ENCODE measurements at regions of chr19 and their contacts with region 1.

Region 1: DNA sequence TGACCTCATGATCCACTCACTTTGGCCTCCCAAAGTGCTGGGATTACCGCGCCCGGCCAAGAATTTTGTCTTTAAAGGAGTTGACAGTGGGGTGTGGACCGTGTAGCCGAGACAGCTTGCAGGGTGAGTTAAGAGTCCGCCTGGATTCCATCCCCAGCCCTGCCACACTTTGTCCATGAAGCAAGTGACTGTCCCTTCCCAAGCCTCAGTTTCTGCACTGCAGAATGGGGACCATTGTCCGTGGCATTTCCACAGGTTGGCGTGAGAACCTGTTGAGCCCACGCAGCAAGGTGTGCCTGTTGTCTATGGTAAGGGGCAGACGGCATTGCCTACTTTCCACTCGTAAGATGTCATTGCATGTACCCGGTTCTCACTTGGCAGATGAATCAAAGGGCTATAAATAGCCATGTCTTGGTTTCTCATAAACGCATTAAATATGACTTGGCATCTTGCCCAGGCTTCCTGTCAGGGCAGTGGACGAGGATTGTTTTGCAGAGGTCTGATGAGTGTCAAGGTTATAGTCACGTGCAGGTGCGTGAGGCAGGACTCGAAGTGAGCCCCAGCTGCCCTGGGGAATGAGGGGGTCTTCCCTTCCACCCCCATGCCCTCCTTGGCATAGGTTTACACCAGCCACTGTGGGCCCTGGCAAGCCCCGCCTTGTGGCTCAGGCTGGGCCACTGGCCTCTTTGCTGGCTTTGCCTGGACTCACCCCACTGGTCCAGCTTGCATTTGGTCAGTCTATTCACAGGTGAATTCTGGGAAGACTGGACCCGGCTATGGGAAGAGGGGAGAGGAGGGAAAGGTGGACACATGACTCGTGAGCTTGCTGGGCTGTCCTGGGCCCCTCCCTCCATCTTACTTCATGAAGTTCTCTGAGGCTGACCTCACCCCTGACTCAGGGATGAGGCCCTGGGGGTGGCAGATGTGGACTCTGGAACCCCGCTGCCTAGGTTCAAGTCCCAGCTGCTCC is 14.6 kb downstream of the FAM187B start:
- DNase-seq: peak; percentile 96 to 100 (median 97)
- H3K4me3 ChIP-seq: peak overlapping the region in 1 of 3 experiments; percentile 60
- H3K4me3 Mint-ChIP-seq: peak overlapping the region; percentile 49 to 69
- H3K27ac ChIP-seq: peak overlapping the region; percentile 81 to 95
- H3K27ac Mint-ChIP-seq: peak overlapping the region; percentile 93 to 98 (median 97)
- H3K4me1 ChIP-seq: peaks cover 80 to 82% of the 10 kb centered on the region in 2 donors
- H3K4me1 Mint-ChIP-seq: peaks cover 72% of the 10 kb centered on the region
- H3K27me3 ChIP-seq: no peaks in the 10 kb centered on the region
- H3K27me3 Mint-ChIP-seq: peaks cover 0 to 10% (median 0%) of the 10 kb centered on the region in 3 donors
- CTCF ChIP-seq: no peak

Region 2: DNA sequence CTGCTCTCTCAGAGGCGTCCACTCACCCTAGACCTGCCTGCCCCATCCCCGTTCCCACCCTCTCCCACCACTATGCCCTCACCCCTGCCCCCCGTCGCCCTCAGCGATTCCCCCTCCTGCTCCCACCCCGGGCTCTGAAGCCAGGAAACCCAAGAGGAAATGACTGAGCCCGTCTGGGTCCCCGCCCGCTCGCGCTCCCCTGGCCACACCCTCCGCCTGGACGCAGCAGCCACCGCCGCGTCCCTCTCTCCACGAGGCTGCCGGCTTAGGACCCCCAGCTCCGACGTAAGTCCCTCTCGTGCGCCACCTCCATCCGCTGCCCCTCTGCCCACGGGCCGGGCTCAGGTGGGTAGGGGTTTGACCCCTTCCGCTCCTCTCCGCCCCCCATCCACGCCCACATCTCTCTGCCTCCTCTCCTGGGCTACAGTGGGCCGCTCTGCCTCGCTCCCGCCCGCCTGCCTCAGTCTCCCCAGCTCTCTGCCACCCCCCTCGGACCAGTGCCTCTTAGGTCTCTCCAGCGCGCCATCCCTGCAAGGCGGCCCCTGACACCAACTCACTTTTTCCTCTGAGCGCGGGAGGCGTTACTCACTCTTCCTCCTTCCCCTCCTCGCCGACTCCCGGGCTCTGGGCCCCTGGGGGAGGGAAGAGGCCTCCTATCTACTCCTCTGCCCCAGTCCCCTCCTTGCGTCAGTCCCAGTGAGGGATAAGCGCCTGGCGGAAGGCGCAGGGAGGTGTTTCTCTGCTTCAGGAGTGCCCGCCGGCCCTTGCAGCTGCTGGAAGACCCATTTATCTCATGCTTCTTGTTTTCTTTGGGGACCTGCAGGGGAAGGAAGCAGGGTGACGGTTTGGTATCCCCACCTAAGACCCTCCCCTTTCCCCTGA is 59.2 kb before region 1 on chr19 and contains the start of gene FXYD5:
- intact Hi-C with region 1: loop called in 1 of 2 experiments (anchors 2 kb)
- DNase-seq: peak; percentile 77 to 85 (median 79)
- H3K4me3 ChIP-seq: peak within 1 kb of the TSS; percentile 74 to 95 (median 89)
- H3K4me3 Mint-ChIP-seq: peak within 1 kb of the TSS; percentile 99 to 100
- H3K27ac ChIP-seq: peak within 1 kb of the TSS; percentile 76 to 88
- H3K27ac Mint-ChIP-seq: peak within 1 kb of the TSS; percentile 88 to 100 (median 98)
- H3K4me1 ChIP-seq: peaks cover 39 to 57% of the 10 kb centered on the region in 2 donors
- H3K4me1 Mint-ChIP-seq: peaks cover 50% of the 10 kb centered on the region
- H3K27me3 ChIP-seq: no peaks in the 10 kb centered on the region
- H3K27me3 Mint-ChIP-seq: peaks cover 5 to 14% (median 5%) of the 10 kb centered on the region in 3 donors
- CTCF ChIP-seq: no peak
- polyA plus RNA-seq, gene FXYD5: 204 to 673 (median 312) TPM

Region 3: GRCh38 chr19:35177377-35178274 is 36.3 kb before region 1 on chr19:
- intact Hi-C with region 1: loop called in 1 of 2 experiments (anchors 5 kb)
- DNase-seq: peak in 1 of 3 donors; percentile 59
- H3K4me3 ChIP-seq: no peak overlapping the region
- H3K4me3 Mint-ChIP-seq: no peak overlapping the region
- H3K27ac ChIP-seq: no peak overlapping the region
- H3K27ac Mint-ChIP-seq: peak overlapping the region in 5 of 7 donors; percentile 4 to 73 (median 52)
- H3K4me1 ChIP-seq: peaks cover 16 to 17% of the 10 kb centered on the region in 2 donors
- H3K4me1 Mint-ChIP-seq: peaks cover 38% of the 10 kb centered on the region
- H3K27me3 ChIP-seq: no peaks in the 10 kb centered on the region
- H3K27me3 Mint-ChIP-seq: peaks cover 0 to 2% (median 1%) of the 10 kb centered on the region in 3 donors
- CTCF ChIP-seq: no peak

Region 4: DNA sequence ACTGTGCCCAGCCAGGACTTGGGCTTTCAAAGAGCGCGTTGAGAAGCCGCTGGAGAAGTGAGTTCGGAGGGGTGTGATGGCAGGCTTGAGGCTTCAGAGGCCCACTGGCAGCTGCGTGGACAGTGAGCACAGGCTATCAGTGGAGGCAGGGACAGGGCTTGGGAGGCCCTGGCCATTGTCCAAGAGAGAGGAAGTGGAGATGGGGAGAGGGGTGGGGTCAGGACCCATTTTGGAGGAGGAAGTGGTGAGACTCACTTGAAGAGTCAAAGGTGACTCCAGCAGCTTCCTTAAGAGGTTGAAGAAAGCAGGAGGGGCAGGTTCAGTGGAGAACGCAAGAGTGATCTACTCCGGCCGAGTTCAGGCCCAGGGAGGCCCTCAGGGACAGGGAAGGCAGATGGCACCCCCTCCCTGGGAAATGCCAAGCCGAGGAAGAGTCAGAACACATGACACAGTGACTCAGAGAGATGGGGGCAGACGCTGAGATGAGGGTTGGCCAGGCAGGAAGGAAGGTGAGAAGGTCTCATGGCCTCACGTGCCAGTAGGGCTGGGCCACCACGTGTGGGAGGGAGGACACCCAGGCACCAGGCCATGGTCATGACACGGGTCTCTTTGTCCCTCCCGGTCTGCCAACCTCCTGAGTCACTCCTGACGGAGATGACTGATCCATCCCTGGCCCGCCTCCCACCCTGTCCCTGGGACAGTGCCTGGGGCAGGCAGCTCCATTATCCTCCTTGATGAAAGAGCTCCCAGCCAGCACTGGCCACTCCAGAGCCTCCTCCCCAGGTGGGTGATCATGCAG is 104.9 kb after region 1 on chr19:
- intact Hi-C with region 1: loop called in 1 of 2 experiments (anchors 2 kb)
- DNase-seq: peak; percentile 97 to 99 (median 97)
- H3K4me3 ChIP-seq: no peak overlapping the region
- H3K4me3 Mint-ChIP-seq: peak overlapping the region; percentile 20 to 67
- H3K27ac ChIP-seq: peak overlapping the region; percentile 83 to 90
- H3K27ac Mint-ChIP-seq: peak overlapping the region; percentile 87 to 99 (median 98)
- H3K4me1 ChIP-seq: peaks cover 65 to 74% of the 10 kb centered on the region in 2 donors
- H3K4me1 Mint-ChIP-seq: peaks cover 65% of the 10 kb centered on the region
- H3K27me3 ChIP-seq: no peaks in the 10 kb centered on the region
- H3K27me3 Mint-ChIP-seq: peaks cover 0 to 5% (median 2%) of the 10 kb centered on the region in 3 donors
- CTCF ChIP-seq: no peak

Region 5: GRCh38 chr19:35449053-35449687 is 235.2 kb after region 1 on chr19:
- intact Hi-C with region 1: loop called in 1 of 2 experiments (anchors 10 kb)
- DNase-seq: peak; percentile 77 to 87 (median 80)
- H3K4me3 ChIP-seq: peak overlapping the region; percentile 4 to 73 (median 32)
- H3K4me3 Mint-ChIP-seq: peak overlapping the region; percentile 72 to 79
- H3K27ac ChIP-seq: peak overlapping the region; percentile 95 to 99
- H3K27ac Mint-ChIP-seq: peak overlapping the region; percentile 98 to 100 (median 100)
- H3K4me1 ChIP-seq: peaks cover 74 to 81% of the 10 kb centered on the region in 2 donors
- H3K4me1 Mint-ChIP-seq: peaks cover 77% of the 10 kb centered on the region
- H3K27me3 ChIP-seq: no peaks in the 10 kb centered on the region
- H3K27me3 Mint-ChIP-seq: peaks cover 0 to 16% (median 7%) of the 10 kb centered on the region in 3 donors
- CTCF ChIP-seq: no peak

Region 6: DNA sequence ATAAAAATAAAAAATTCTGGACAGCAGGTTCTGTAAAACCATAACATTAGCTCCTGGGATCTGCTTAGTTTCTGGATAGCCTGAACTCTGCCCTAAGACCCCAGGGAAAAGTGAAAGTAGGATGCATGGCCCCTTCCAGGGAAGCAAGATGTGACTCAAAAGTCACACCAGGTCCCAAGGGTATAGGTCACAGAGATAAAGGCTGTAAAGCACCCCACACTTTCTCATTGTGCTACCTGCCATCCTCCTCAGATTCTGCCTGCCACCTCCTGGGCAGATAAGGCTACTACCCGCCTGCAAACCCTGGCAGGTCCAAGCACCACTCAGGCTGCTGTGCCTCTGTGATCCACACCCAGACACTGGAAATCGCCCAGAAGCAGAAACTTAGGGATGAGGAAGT is 254.7 kb after region 1 on chr19:
- intact Hi-C with region 1: loop called in 1 of 2 experiments (anchors 10 kb)
- DNase-seq: peak; percentile 67 to 84 (median 72)
- H3K4me3 ChIP-seq: no peak overlapping the region
- H3K4me3 Mint-ChIP-seq: no peak overlapping the region
- H3K27ac ChIP-seq: no peak overlapping the region
- H3K27ac Mint-ChIP-seq: peak overlapping the region in 3 of 7 donors; percentile 19 to 41 (median 36)
- H3K4me1 ChIP-seq: peaks cover 5 to 11% of the 10 kb centered on the region in 2 donors
- H3K4me1 Mint-ChIP-seq: peaks cover 18% of the 10 kb centered on the region
- H3K27me3 ChIP-seq: no peaks in the 10 kb centered on the region
- H3K27me3 Mint-ChIP-seq: peaks cover 0 to 4% (median 0%) of the 10 kb centered on the region in 3 donors
- CTCF ChIP-seq: peak; percentile 85